PC-3 (cell line): ENCODE measurements at regions of chr20 and their contacts with region 1.

Region 1: DNA sequence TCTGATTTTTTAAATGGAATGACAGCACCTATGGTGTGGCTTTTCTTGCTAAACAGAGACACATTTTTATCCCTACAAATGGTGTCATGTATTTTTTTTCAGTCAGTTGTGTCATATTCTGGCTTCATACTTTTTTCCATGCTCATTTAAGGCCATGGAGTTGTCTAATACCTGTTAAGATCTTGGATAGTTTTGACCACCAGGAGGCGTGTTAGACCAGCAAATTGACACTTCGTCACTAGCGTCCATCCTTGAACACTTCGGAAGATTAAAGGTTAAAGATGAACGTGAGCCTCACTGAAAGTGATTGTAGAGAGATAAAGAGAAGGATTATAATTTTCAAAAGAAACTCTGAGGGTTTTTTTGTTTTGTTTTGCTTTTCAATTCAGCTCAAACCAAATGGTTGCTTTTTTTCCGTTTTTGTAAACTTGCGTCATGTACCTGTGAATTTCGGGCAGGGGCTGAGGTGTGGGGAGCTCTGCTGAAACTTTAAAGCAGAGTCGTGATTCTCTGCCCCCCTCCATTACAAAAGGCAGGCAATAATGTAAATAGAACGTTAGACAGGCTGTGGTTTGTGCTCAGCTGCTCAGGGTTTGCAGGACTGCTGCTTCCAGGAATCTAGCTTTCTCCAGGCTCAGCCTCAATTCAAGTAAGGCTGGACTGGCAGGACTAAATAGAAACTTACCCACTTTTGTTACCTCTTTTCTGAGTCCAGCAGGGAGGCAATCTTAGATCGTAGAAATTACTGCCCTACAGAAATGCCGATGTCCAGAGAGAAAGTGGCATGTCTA is 245.1 kb downstream of the FOXA2 start:
- DNase-seq: peak; percentile 95
- ATAC-seq: peak; percentile 56
- H3K4me3 ChIP-seq: no peak overlapping the region
- H3K27ac ChIP-seq: no peak overlapping the region
- H3K4me1 ChIP-seq: peaks cover 30% of the 10 kb centered on the region
- H3K27me3 ChIP-seq: no peaks in the 10 kb centered on the region
- CTCF ChIP-seq: peak; percentile 97

Region 2: GRCh38 chr20:21618759-21619416 is 720.4 kb before region 1 on chr20:
- CTCF ChIA-PET with region 1: no interaction called
- POLR2A ChIA-PET with region 1: no interaction called
- intact Hi-C with region 1: no loop called
- DNase-seq: no peak
- ATAC-seq: no peak
- H3K4me3 ChIP-seq: no peak overlapping the region
- H3K27ac ChIP-seq: no peak overlapping the region
- H3K4me1 ChIP-seq: no peaks in the 10 kb centered on the region
- H3K27me3 ChIP-seq: peaks cover 30% of the 10 kb centered on the region; the same call in 1 of the 2 replicates
- CTCF ChIP-seq: no peak

Region 3: DNA sequence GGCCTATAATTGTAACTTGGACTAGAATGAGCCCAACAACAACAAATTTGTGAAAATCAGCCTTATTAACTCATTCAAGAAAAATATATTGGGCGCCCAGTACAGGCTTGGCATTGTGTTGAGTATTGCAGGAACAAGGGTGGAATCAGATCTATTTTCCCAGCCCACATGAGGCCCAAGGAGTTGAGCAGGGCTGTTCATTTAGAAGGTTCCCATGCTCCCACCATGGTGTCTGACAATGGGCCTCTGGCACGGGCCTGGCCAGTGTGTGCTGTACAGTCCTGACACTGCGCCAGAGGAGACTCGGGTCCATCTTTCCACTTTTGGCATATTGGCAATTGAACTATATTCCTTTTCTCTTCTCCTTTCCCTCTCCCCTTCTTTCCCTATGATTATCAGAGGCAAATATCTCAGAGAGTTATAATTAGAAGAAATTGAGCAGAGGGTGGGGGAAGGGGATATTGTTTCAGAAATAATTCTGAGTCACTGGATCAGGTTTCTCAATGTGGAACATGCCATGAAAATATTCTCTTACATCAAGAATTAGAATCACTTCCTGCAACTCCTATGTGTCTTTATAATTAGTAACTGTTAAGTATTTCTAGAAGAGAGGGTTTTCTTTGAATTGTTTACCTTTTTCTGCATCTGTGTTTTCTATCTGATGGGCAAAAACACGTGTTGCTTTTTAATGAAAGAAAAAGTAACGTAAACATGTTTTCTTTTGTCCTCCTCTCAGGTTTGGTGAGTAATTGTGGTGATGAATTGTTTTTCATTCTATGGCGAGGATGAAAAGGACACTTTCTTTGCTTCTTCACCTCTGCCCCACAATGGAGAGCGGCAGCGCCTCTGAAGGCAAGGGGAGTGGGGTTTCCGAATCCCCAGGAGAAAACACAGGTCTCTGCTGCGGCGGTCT is 35.6 kb after region 1 on chr20:
- CTCF ChIA-PET with region 1: no interaction called
- POLR2A ChIA-PET with region 1: no interaction called
- intact Hi-C with region 1: loop called (anchors 1 kb)
- DNase-seq: peak; percentile 76
- ATAC-seq: peak; percentile 18
- H3K4me3 ChIP-seq: peak overlapping the region; percentile 43
- H3K27ac ChIP-seq: peak overlapping the region; percentile 85
- H3K4me1 ChIP-seq: peaks cover 65% of the 10 kb centered on the region
- H3K27me3 ChIP-seq: no peaks in the 10 kb centered on the region
- CTCF ChIP-seq: no peak

Region 4: DNA sequence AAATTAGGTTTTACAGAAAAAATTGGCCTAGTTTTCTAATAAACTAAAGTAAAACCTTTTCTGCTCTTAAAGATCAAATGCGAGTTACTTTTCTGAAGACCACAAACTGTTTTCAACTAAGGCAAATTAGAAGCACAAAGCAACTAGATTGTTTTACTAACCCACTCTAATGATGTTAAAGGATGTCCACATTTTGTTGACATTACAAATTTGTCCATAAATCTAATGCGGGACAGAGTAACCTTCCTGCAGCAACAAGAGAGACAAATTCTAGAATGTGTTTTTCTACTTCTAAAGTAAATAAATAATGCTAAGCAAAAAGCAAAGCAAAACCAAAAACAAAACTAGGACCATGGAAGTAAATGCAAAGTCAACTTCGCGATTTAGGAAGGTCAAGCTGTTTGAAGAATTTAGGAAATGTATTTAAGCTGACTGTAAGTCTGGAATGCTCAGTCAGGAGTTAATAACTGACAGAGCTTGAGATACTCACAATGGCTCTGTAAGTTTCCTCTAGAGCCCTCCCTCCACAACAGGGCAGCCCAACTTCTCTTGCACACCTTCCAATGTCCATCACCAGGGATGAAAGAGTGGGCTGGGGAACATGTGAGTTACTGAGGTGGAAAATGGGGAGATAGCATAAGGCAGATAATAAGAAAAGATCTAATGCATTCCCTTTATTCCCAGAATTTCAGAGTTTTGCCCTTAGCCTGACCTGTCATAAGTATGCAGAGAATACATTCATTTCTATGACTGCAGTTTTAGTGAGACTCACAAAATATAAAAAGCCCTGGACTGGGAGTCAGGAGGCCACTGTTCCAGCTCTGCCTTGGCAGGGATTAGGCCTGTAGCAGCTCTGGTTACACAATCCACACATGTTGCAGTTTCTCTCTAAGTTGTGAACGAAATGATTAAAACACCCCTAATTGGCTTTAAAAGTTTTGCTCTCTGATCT is 86.3 kb after region 1 on chr20:
- CTCF ChIA-PET with region 1: no interaction called
- POLR2A ChIA-PET with region 1: no interaction called
- intact Hi-C with region 1: no loop called
- DNase-seq: no peak
- ATAC-seq: no peak
- H3K4me3 ChIP-seq: no peak overlapping the region
- H3K27ac ChIP-seq: no peak overlapping the region
- H3K4me1 ChIP-seq: peaks cover 17% of the 10 kb centered on the region
- H3K27me3 ChIP-seq: no peaks in the 10 kb centered on the region
- CTCF ChIP-seq: no peak

Region 5: GRCh38 chr20:22453239-22454080 is 114.2 kb after region 1 on chr20:
- CTCF ChIA-PET with region 1: interaction called, 7 read pairs
- POLR2A ChIA-PET with region 1: no interaction called
- intact Hi-C with region 1: loop called (anchors 2 kb)
- DNase-seq: peak; percentile 78
- ATAC-seq: peak; percentile 39; the same call in 1 of the 2 replicates
- H3K4me3 ChIP-seq: no peak overlapping the region
- H3K27ac ChIP-seq: no peak overlapping the region
- H3K4me1 ChIP-seq: peaks cover 8% of the 10 kb centered on the region; the same call in 1 of the 2 replicates
- H3K27me3 ChIP-seq: no peaks in the 10 kb centered on the region
- CTCF ChIP-seq: peak; percentile 94

Region 6: GRCh38 chr20:22490287-22491193 is 151.3 kb after region 1 on chr20:
- CTCF ChIA-PET with region 1: no interaction called
- POLR2A ChIA-PET with region 1: no interaction called
- intact Hi-C with region 1: loop called (anchors 2 kb)
- DNase-seq: peak; percentile 61
- ATAC-seq: peak; percentile 89
- H3K4me3 ChIP-seq: no peak overlapping the region
- H3K27ac ChIP-seq: no peak overlapping the region
- H3K4me1 ChIP-seq: peaks cover 10% of the 10 kb centered on the region; the same call in 1 of the 2 replicates
- H3K27me3 ChIP-seq: no peaks in the 10 kb centered on the region
- CTCF ChIP-seq: peak; percentile 71

Region 7: GRCh38 chr20:22586645-22587310 is 247.5 kb after region 1 on chr20:
- CTCF ChIA-PET with region 1: interaction called, 12 read pairs
- POLR2A ChIA-PET with region 1: no interaction called
- intact Hi-C with region 1: loop called (anchors 1 kb)
- DNase-seq: peak; percentile 63
- ATAC-seq: peak; percentile 19
- H3K4me3 ChIP-seq: peak overlapping the region; percentile 58
- H3K27ac ChIP-seq: no peak overlapping the region
- H3K4me1 ChIP-seq: peaks cover 6% of the 10 kb centered on the region; the same call in 1 of the 2 replicates
- H3K27me3 ChIP-seq: peaks cover 27% of the 10 kb centered on the region
- CTCF ChIP-seq: peak; percentile 95

Region 8: DNA sequence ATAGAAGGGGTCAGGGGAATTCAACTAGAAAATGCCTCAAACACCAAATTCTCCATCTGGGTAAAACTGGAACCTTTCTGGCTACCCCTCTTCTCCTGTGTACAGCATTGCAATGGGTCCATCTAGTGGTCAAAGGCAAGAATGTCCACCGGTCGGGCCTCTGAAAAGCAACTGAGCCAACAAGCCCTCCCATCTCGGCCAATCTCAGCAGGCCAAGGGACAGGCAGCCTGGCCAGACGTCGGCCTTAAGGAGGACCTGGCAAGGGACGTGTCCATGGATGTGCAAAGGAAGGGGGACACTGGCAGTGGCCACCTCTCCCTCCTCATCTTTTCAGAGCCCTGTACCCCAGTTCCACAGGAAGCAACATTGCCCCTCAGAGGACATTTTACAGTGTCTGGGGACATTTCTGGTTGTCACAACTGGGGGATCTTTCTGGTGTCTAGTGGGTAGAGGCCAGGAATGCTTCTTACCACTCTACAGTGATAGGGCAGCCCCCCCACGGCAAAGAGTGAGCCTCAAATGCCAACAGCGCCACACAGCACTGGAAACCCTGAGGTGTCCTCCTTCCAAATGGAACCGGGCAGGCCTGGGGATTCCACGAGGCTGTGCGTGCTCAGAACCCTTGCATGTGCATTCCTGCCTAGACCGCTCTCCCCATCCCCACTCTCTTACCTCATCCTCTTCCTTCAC is 344.9 kb after region 1 on chr20:
- CTCF ChIA-PET with region 1: interaction called, 10 read pairs
- POLR2A ChIA-PET with region 1: no interaction called
- intact Hi-C with region 1: loop called (anchors 1 kb)
- DNase-seq: peak; percentile 90
- ATAC-seq: peak; percentile 76
- H3K4me3 ChIP-seq: no peak overlapping the region
- H3K27ac ChIP-seq: no peak overlapping the region
- H3K4me1 ChIP-seq: peaks cover 9% of the 10 kb centered on the region; the same call in 1 of the 2 replicates
- H3K27me3 ChIP-seq: peaks cover under 1% of the 10 kb centered on the region; the same call in 1 of the 2 replicates
- CTCF ChIP-seq: peak; percentile 95